WTC11 (cell line): ENCODE measurements at regions of chr5 and their contacts with region 1.

Region 1: DNA sequence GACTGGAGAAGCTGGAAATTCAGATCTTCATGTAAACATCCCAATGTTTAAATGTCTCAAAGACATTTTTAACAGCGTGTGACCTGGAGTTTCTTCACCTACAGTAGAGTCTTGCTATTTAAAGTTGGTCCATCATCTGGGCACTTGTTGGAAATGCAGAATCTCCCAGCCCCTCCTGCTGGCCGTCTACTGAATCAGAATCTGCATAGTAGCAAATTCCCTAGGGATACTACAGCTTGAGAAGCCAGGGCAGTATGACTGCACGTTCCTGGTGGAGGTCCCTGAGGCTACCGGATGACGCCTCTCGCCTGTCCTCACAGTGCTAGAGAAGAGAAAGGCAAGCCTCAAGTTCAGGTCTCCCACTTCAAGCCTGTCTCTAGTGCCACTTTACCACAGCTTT is 15.7 kb downstream of the SAP30L start:
- DNase-seq: peak; percentile 49
- ATAC-seq: peak; percentile 93
- H3K4me3 Mint-ChIP-seq: no peak overlapping the region
- H3K27ac Mint-ChIP-seq: 0 out of 2 replicates have a peak overlapping the region, but pooled peaks have one; percentile 41
- H3K4me1 Mint-ChIP-seq: peaks cover 7% of the 10 kb centered on the region
- H3K27me3 Mint-ChIP-seq: peaks cover 7% of the 10 kb centered on the region
- CTCF ChIP-seq: no peak

Region 2: DNA sequence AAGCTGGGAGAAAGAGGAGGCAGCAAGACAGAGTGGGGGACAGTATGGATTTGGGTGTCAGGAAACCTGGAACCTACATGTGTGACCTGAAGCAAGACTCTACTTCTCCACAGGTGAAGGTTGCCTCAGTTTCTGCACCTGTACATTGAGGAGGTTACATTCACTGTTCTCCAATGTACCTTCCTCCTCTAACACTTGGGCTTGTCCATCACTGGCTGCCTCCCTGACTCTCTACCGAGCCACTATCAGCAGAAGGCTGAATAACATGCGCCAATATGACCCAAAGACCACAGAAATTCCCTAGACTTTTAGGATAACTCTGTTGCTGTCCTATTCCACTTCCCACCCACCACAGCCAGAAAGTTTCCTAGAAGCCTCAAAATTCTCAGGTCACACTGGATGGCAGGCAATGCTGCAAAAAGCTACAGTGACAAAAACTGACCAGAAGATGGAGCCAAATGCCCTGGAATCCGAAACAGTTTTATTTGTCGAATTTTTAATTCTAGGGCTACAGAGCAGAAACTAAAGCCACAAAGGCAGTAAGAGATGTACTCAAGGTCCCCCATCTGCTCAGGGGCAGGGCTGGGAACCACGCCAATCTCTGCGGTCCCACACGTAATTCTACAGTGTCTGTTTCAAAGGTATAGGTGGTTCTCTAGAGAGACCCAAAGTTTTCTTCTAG is 487.3 kb before region 1 on chr5:
- CTCF ChIA-PET with region 1: interaction called, 13 read pairs
- POLR2A ChIA-PET with region 1: no interaction called
- DNase-seq: peak; percentile 20
- ATAC-seq: peak; percentile 84
- H3K4me3 Mint-ChIP-seq: no peak overlapping the region
- H3K27ac Mint-ChIP-seq: no peak overlapping the region
- H3K4me1 Mint-ChIP-seq: no peaks in the 10 kb centered on the region
- H3K27me3 Mint-ChIP-seq: no peaks in the 10 kb centered on the region; the same call in 1 of the 2 replicates
- CTCF ChIP-seq: peak; percentile 55

Region 3: GRCh38 chr5:154421868-154422267 is 39.7 kb before region 1 on chr5:
- CTCF ChIA-PET with region 1: interaction called, 20 read pairs
- POLR2A ChIA-PET with region 1: no interaction called
- DNase-seq: peak; percentile 65
- ATAC-seq: peak; percentile 86
- H3K4me3 Mint-ChIP-seq: no peak overlapping the region
- H3K27ac Mint-ChIP-seq: no peak overlapping the region
- H3K4me1 Mint-ChIP-seq: peaks cover 11% of the 10 kb centered on the region
- H3K27me3 Mint-ChIP-seq: no peaks in the 10 kb centered on the region
- CTCF ChIP-seq: peak; percentile 48; the same call in 1 of the 2 replicates

Region 4: GRCh38 chr5:154445422-154446182 is 15.9 kb before region 1 on chr5 and contains the start of gene SAP30L:
- CTCF ChIA-PET with region 1: interaction called, 15 read pairs
- POLR2A ChIA-PET with region 1: interaction called, 7 read pairs
- DNase-seq: peak; percentile 97
- ATAC-seq: peak; percentile 91
- H3K4me3 Mint-ChIP-seq: peak within 1 kb of the TSS; percentile 98
- H3K27ac Mint-ChIP-seq: peak within 1 kb of the TSS; percentile 47
- H3K4me1 Mint-ChIP-seq: peaks cover 18% of the 10 kb centered on the region
- H3K27me3 Mint-ChIP-seq: peaks cover 8% of the 10 kb centered on the region
- CTCF ChIP-seq: no peak
- total RNA-seq, gene SAP30L: 25.6 to 33.5 TPM (median 32.0 TPM) in 3 replicates

Region 5: GRCh38 chr5:154610321-154611154 is 149.0 kb after region 1 on chr5:
- CTCF ChIA-PET with region 1: interaction called, 91 read pairs
- POLR2A ChIA-PET with region 1: no interaction called
- DNase-seq: peak; percentile 94
- ATAC-seq: peak; percentile 87
- H3K4me3 Mint-ChIP-seq: peak overlapping the region; percentile 65
- H3K27ac Mint-ChIP-seq: no peak overlapping the region
- H3K4me1 Mint-ChIP-seq: peaks cover 29% of the 10 kb centered on the region
- H3K27me3 Mint-ChIP-seq: peaks cover 79% of the 10 kb centered on the region
- CTCF ChIP-seq: peak; percentile 91